ENCODE measurements at regions of chr20 and their contacts with region 1.

Region 1: GRCh38 chr20:47521059-47521808 is 19.5 kb downstream of the NCOA3 start:
- DNase-seq: peak in 1 of 2 experiments; percentile 92
- H3K4me3 ChIP-seq: no peak overlapping the region
- H3K27ac ChIP-seq: peak overlapping the region; percentile 50; the same call in 1 of the 2 replicates
- H3K4me1 ChIP-seq: peaks cover 0 to 7% (median 4%) of the 10 kb centered on the region in 4 experiments; a peak in 5 of 7 replicates
- H3K27me3 ChIP-seq: no peaks in the 10 kb centered on the region
- CTCF ChIP-seq: peak; percentile 59 to 92 (median 61)
- EP300 ChIP-seq: no peak
- POLR2A ChIP-seq: no peak
- RAD21 ChIP-seq: peak; percentile 69 to 77

Region 2: DNA sequence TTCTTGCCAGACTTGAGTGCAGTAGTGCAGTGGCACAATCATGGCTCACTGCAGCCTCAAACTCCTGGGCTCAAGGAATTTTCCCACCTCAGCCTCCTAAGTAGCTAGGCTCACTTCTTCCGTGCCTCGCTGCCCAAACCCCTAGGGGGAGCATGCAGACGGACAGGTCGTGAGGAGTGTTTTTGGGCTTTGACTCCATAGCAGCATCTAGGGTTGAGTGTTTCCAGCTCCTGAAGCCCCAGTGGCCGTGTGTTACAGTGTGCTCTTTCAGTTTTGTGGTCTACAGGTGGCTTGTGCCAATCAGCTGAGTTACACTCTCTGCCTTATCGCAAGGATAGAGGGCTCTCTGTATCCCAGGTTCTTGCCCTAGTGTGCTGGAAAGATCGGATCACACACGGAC is 13.9 kb after region 1 on chr20:
- CTCF ChIA-PET with region 1: interaction called, 12 read pairs
- POLR2A ChIA-PET with region 1: interaction called, 7 read pairs
- DNase-seq: peak; percentile 50 to 65
- H3K4me3 ChIP-seq: no peak overlapping the region
- H3K27ac ChIP-seq: no peak overlapping the region
- H3K4me1 ChIP-seq: peaks cover 0 to 2% (median 1%) of the 10 kb centered on the region in 4 experiments; a peak in 2 of 7 replicates
- H3K27me3 ChIP-seq: no peaks in the 10 kb centered on the region
- CTCF ChIP-seq: peak; percentile 72 to 89 (median 87)
- EP300 ChIP-seq: no peak
- POLR2A ChIP-seq: no peak
- RAD21 ChIP-seq: peak; percentile 56 to 64

Region 3: GRCh38 chr20:47561603-47562583 is 40.7 kb after region 1 on chr20:
- CTCF ChIA-PET with region 1: interaction called, 11 read pairs
- POLR2A ChIA-PET with region 1: no interaction called
- DNase-seq: no peak
- H3K4me3 ChIP-seq: no peak overlapping the region
- H3K27ac ChIP-seq: no peak overlapping the region
- H3K4me1 ChIP-seq: peaks cover 2 to 13% (median 8%) of the 10 kb centered on the region in 4 experiments; a peak in 5 of 7 replicates
- H3K27me3 ChIP-seq: no peaks in the 10 kb centered on the region
- CTCF ChIP-seq: no peak
- EP300 ChIP-seq: no peak
- POLR2A ChIP-seq: no peak
- RAD21 ChIP-seq: no peak

Region 4: DNA sequence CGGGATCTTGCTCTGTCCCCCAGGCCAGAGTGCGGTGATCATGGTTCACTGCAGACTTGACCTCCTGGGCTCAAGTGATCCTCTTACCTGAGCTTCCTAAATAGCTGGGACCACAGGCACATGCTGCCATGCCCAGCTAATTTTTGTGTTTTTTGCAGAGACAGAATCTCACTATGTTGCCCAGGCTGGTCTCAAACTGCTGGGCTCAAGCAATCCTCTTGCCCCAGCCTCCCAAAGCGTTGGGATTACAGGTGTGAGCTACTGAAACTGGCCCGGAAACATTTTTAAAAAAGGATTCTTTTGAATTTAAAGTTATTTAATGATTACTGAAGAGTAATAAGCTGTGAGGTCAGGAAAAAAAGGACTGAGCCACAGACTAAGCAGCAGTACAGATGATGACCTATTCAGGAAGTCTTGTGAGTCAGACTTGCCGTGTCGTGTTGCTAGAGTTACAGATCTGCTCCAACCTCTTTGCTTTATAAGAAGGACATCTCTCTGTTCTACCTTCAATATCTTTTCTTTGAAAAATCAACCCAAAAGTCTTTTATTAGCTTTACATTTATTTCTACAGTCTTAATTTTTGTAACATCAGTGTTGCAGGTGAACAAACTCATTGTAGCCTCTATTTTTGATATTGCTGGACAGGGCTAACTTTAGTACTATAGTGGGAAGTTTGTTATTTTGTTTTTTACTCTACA is 89.2 kb after region 1 on chr20:
- CTCF ChIA-PET with region 1: interaction called, 12 read pairs
- POLR2A ChIA-PET with region 1: no interaction called
- DNase-seq: no peak
- H3K4me3 ChIP-seq: no peak overlapping the region
- H3K27ac ChIP-seq: no peak overlapping the region
- H3K4me1 ChIP-seq: no peaks in the 10 kb centered on the region
- H3K27me3 ChIP-seq: peaks cover 0 to 1% (median 0%) of the 10 kb centered on the region in 4 experiments; a peak in 1 of 7 replicates
- CTCF ChIP-seq: no peak
- EP300 ChIP-seq: no peak
- POLR2A ChIP-seq: no peak
- RAD21 ChIP-seq: no peak

Measured in H1 (cell line).